Tibial artery (tissue), 4 donors: ENCODE measurements at regions of chrX and their contacts with region 1.

Region 1: DNA sequence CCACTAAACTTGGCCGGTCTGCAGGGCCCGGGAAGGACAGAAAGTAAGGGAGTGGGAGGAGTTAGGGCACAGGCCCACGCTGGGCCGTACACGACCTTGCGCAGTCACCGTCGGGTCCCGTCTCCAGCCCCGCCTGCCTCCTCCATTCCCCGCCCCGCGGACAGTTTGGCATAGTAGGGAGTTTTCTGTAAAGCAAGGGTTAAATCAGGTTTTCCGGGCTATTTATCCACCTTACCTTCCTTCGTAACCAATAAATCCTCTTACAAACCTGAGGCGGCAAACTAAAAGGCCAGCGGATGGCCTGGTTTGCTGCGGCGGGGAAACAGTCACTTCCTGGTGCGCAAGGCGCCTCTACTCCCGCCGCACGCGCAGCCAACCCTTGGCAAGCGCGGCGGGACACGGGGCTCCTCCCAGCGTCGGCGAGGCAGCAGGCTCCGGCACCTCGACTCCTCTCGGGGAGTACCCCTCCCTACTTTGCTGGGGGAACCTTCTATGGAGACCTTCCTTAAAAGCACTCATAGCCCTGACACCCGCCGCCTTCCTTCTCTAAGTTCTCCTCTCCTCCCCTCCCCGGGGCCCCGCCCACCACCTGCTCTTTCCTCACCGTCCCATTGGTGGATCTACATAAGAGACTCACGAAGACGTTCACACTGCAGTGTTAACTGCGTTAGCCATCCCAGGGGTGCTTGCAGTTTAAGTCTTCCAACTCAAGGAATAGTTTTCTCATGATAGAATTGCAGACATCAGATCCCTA is at the start of gene TRMT2B:
- DNase-seq: peak; percentile 76 to 91
- H3K4me3 ChIP-seq: peak within 1 kb of the TSS; percentile 63 to 71
- H3K27ac ChIP-seq: peak within 1 kb of the TSS; percentile 91 to 92
- H3K4me1 ChIP-seq: no peaks in the 10 kb centered on the region
- H3K27me3 ChIP-seq: no peaks in the 10 kb centered on the region
- CTCF ChIP-seq: no peak

Region 2: DNA sequence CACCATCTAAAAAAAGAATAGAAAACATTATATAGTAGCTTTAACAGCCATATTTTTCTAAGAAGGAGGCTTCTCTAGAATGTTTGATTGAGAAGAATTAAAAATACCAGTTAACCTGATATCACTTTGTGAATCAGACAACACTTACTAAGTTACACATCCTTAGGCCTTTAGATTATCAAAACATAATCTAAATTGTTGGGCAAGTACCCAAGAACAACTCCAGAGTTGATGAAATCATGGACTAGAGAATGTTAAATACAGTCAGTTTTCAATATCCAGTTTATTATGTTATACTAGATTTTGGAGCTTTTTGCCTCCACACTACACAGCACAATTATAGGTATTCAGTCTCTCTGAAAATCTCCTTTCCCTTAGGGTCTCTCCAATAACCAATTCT is 42.6 kb before region 1 on chrX:
- intact Hi-C with region 1: no loop called
- DNase-seq: no peak
- H3K4me3 ChIP-seq: no peak overlapping the region
- H3K27ac ChIP-seq: no peak overlapping the region
- H3K4me1 ChIP-seq: no peaks in the 10 kb centered on the region
- H3K27me3 ChIP-seq: no peaks in the 10 kb centered on the region
- CTCF ChIP-seq: no peak

Region 3: GRCh38 chrX:101097546-101098453 is 46.1 kb after region 1 on chrX and contains the start of gene CENPI:
- intact Hi-C with region 1: loop called (anchors 5 kb)
- DNase-seq: peak; percentile 90 to 96
- H3K4me3 ChIP-seq: peak within 1 kb of the TSS; percentile 49 to 54
- H3K27ac ChIP-seq: peak within 1 kb of the TSS; percentile 71 to 90
- H3K4me1 ChIP-seq: no peaks in the 10 kb centered on the region
- H3K27me3 ChIP-seq: no peaks in the 10 kb centered on the region
- CTCF ChIP-seq: no peak